ENCODE measurements at regions of chr15 and their contacts with region 1.

Region 1: DNA sequence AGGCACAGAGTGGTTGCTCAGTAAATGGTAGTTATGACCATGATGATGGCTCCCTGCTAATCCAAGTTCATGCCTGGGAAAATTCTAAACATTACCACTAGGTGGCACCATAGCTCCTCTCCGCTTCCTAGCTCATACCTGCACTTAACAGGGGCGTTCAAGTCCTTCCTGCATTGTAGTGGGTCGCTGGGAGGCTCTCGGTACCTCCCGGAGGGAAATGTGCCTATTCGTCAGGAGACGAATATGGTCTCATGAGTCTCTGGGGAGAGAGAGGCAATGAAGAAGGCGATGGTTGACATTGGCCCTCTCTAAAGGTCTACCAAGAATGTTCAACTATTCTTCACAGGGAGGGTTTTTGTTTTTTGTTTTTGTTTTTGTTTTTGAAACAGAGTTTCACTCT is 10.9 kb downstream of the MESP1 start:
- DNase-seq: peak; percentile 71
- ATAC-seq: peak; percentile 95
- H3K4me3 ChIP-seq: no peak overlapping the region
- H3K27ac ChIP-seq: no peak overlapping the region
- H3K4me1 ChIP-seq: no peaks in the 10 kb centered on the region
- H3K27me3 ChIP-seq: peaks cover 39% of the 10 kb centered on the region
- CTCF ChIP-seq: peak; percentile 89
- POLR2A ChIP-seq: no peak
- RAD21 ChIP-seq: peak; percentile 84

Region 2: GRCh38 chr15:89704411-89704810 is 35.7 kb before region 1 on chr15:
- CTCF ChIA-PET with region 1: no interaction called
- POLR2A ChIA-PET with region 1: no interaction called
- dilution Hi-C with region 1: no loop called
- in situ Hi-C with region 1: no loop called
- intact Hi-C with region 1: no loop called
- DNase-seq: peak; percentile 1
- ATAC-seq: no peak
- H3K4me3 ChIP-seq: no peak overlapping the region
- H3K27ac ChIP-seq: no peak overlapping the region
- H3K4me1 ChIP-seq: no peaks in the 10 kb centered on the region
- H3K27me3 ChIP-seq: peaks cover 47% of the 10 kb centered on the region
- CTCF ChIP-seq: no peak
- POLR2A ChIP-seq: no peak
- RAD21 ChIP-seq: no peak

Region 3: DNA sequence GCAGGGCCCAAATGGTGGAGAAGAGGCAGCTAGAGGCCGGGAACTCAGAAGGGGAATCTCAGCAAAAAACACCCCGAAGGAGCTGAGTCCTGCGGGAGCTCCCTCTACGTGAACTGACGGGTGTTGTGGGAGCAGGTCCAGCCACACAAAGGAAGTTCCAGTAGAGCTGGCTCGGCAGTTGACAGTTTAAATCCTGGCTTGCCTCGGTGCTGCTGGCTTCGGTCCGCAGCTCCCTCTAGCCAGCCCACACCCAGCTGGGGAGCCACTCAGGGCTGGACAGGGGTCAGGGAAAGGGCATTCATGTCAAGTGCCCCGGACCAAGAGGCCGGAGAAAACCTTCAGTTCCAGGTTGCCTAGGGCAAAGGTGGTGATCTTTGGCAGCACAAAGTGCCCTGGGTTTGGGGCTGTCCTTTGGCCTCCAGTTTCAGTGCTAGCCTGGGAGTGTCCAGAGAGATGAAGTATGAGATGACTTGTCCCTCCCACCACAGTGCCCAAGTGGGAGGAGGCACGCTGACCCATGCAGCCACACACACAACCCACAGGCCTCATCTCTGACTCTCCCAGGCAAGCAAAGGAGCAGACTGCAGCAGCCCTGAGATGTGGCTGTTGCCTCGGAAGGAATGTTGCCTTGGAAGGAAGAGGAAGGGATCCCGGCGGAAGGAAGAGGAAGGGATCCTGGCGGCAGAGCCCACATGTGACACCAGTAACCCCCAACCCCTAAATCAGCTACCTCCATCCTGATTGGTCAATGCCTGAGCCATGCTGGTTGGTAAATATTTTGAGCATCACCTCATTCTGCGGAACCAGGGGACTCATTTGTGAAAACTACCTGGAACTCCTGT is 88.3 kb after region 1 on chr15:
- CTCF ChIA-PET with region 1: no interaction called
- POLR2A ChIA-PET with region 1: no interaction called
- dilution Hi-C with region 1: no loop called
- in situ Hi-C with region 1: no loop called
- intact Hi-C with region 1: loop called (anchors 1 kb)
- DNase-seq: peak; percentile 71
- ATAC-seq: peak; percentile 95
- H3K4me3 ChIP-seq: no peak overlapping the region
- H3K27ac ChIP-seq: peak overlapping the region; percentile 6; the same call in 1 of the 2 replicates
- H3K4me1 ChIP-seq: peaks cover 21% of the 10 kb centered on the region
- H3K27me3 ChIP-seq: no peaks in the 10 kb centered on the region
- CTCF ChIP-seq: no peak
- POLR2A ChIP-seq: no peak
- RAD21 ChIP-seq: no peak

Region 4: DNA sequence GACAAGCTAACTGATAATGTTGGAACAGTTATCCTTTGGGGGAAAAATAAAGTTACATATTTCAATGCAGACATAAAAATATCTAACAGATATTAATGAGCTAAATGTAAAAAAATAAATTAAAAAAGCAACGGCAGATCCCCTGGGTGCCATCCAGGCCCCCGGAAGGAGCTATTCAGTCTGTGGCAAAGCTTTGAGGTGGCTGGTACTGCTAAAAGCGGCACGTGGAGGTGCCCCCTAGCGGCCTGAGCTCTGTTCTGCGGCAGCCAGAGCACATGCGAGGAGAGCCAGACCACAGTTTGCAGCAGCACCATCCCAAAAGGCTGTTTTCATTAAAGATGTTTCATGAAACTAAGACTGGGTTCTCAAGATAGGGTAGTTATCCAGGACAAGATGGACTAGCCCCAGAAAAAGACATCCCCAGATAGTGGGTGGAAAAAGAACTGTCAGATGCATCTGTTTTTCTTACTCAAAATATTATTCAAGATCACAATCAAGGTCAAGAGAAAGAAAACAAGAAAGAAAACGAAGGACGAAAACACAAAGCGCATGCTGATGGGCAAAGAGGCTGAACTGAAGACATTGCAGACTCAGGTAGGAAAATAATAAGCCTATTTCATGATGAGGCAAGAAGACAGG is 134.9 kb after region 1 on chr15:
- CTCF ChIA-PET with region 1: interaction called, 17 read pairs
- POLR2A ChIA-PET with region 1: no interaction called
- dilution Hi-C with region 1: no loop called
- in situ Hi-C with region 1: no loop called
- intact Hi-C with region 1: loop called (anchors 1 kb)
- DNase-seq: peak; percentile 66
- ATAC-seq: peak; percentile 99
- H3K4me3 ChIP-seq: no peak overlapping the region
- H3K27ac ChIP-seq: no peak overlapping the region
- H3K4me1 ChIP-seq: no peaks in the 10 kb centered on the region
- H3K27me3 ChIP-seq: no peaks in the 10 kb centered on the region
- CTCF ChIP-seq: peak; percentile 90
- POLR2A ChIP-seq: 0 out of 2 replicates have a peak, but pooled peaks have one; percentile 24
- RAD21 ChIP-seq: peak; percentile 91

Region 5: DNA sequence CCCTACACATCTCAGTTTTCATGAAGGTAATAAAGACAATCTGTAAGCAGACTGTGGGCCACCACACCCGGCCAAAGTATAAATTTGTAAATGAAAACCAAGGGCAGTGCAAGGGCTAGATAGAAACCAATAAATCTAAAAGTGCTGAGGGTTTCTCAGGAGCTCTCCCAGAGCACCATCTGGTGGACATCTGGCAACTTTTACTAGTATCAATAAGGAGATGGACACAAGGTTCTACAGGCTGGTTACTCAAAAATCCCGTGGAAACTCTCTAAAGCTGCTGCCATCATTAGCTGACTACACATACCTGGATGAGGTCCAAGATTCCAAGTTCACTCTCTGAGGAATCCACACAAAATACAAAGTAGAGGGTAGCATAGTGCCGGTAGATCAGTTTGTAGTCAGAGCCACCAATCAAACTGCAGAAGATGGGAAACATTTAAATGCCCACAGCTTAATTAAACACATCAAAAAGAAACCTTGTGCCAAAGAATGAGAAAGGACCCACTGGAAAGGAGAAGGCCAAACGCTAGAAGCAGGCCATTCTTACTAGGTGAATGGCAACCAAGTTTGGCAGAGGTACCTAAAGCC is 148.2 kb after region 1 on chr15:
- CTCF ChIA-PET with region 1: interaction called, 14 read pairs
- POLR2A ChIA-PET with region 1: interaction called, 5 read pairs
- dilution Hi-C with region 1: no loop called
- in situ Hi-C with region 1: no loop called
- intact Hi-C with region 1: loop called (anchors 1 kb)
- DNase-seq: peak; percentile 90
- ATAC-seq: peak; percentile 93
- H3K4me3 ChIP-seq: no peak overlapping the region
- H3K27ac ChIP-seq: no peak overlapping the region
- H3K4me1 ChIP-seq: no peaks in the 10 kb centered on the region
- H3K27me3 ChIP-seq: no peaks in the 10 kb centered on the region
- CTCF ChIP-seq: peak; percentile 71
- POLR2A ChIP-seq: no peak
- RAD21 ChIP-seq: peak; percentile 83

Region 6: DNA sequence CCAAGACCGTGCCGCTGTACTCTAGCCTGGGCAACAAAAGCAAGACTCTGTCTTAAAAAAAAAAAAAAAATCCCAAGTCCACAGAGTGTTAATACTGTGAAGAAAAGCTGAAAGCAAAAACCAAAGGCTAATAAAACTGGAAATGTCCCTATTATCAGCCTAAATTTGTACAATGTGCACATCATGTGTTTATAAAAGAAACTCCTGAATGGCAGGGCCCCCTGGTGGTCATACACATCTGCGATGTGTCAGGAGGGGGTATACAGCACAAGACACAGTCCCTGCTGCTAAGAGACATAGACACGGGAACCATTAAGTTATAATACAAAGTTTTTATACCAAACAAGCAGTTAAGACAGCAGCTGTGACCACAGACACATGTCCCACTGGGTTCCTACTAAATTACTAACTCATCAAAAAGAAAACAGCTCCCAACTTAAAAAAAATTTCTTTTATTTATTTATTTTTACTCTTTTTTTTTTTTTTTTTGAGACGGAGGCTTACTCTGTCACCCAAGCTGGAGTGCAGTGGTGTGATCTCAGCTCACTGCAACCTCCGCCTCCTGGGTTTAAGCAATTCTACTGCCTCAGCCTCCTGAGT is 331.2 kb after region 1 on chr15:
- CTCF ChIA-PET with region 1: no interaction called
- POLR2A ChIA-PET with region 1: no interaction called
- dilution Hi-C with region 1: no loop called
- in situ Hi-C with region 1: no loop called
- intact Hi-C with region 1: loop called (anchors 1 kb)
- DNase-seq: peak; percentile 87
- ATAC-seq: peak; percentile 92
- H3K4me3 ChIP-seq: no peak overlapping the region
- H3K27ac ChIP-seq: no peak overlapping the region
- H3K4me1 ChIP-seq: no peaks in the 10 kb centered on the region
- H3K27me3 ChIP-seq: no peaks in the 10 kb centered on the region
- CTCF ChIP-seq: peak; percentile 87
- POLR2A ChIP-seq: no peak
- RAD21 ChIP-seq: peak; percentile 81

Region 7: GRCh38 chr15:90086868-90087268 is 346.7 kb after region 1 on chr15:
- CTCF ChIA-PET with region 1: no interaction called
- POLR2A ChIA-PET with region 1: no interaction called
- dilution Hi-C with region 1: no loop called
- in situ Hi-C with region 1: no loop called
- intact Hi-C with region 1: loop called (anchors 5 kb)
- DNase-seq: peak; percentile 42
- ATAC-seq: peak; percentile 75
- H3K4me3 ChIP-seq: no peak overlapping the region
- H3K27ac ChIP-seq: no peak overlapping the region
- H3K4me1 ChIP-seq: peaks cover 4% of the 10 kb centered on the region; the same call in 1 of the 2 replicates
- H3K27me3 ChIP-seq: no peaks in the 10 kb centered on the region
- CTCF ChIP-seq: peak; percentile 67
- POLR2A ChIP-seq: no peak
- RAD21 ChIP-seq: peak; percentile 79

Measured in IMR-90 (cell line).